Endothelial cell of umbilical vein (primary cell): ENCODE measurements at regions of chr7 and their contacts with region 1.

Region 1: DNA sequence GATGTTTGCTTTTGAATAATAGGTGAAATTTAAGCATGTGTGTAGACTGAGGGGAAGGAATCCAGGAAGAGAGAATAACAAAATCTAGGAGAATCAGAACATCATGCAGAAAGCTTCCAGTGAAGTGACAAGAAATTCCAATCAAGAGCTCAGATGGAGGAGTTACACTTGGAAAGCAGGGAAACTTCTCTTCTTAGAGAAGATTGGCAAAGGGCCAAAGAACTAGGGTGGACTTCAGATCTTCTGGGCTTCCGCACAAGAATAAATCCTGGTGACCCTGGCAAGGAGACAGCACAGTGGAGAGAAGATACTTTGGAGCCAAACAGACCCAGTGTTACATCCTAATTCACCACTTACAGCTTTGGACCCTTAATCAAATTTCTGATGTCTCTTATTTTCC is 32.6 kb upstream of the TMEM243 start:
- DNase-seq: no peak
- H3K4me3 ChIP-seq: no peak overlapping the region
- H3K27ac ChIP-seq: no peak overlapping the region
- H3K4me1 ChIP-seq: no peaks in the 10 kb centered on the region
- H3K27me3 ChIP-seq: peaks cover 1 to 4% of the 10 kb centered on the region in 2 experiments
- CTCF ChIP-seq: no peak
- POLR2A ChIP-seq: no peak

Region 2: GRCh38 chr7:87199700-87200450 is 52.3 kb before region 1 on chr7:
- CTCF ChIA-PET with region 1: no interaction called
- POLR2A ChIA-PET with region 1: no interaction called
- dilution Hi-C with region 1: no loop called
- intact Hi-C with region 1: loop called (anchors 10 kb)
- DNase-seq: peak; percentile 13
- H3K4me3 ChIP-seq: no peak overlapping the region
- H3K27ac ChIP-seq: no peak overlapping the region
- H3K4me1 ChIP-seq: no peaks in the 10 kb centered on the region
- H3K27me3 ChIP-seq: no peaks in the 10 kb centered on the region
- CTCF ChIP-seq: no peak
- POLR2A ChIP-seq: no peak